Panc1 (cell line): ENCODE measurements at regions of chr4 and their contacts with region 1.

Region 1: GRCh38 chr4:21656832-21657231 is 291.7 kb downstream of the KCNIP4 start:
- DNase-seq: no peak
- ATAC-seq: no peak
- H3K4me3 ChIP-seq: no peak overlapping the region
- H3K27ac ChIP-seq: no peak overlapping the region
- H3K4me1 ChIP-seq: no peaks in the 10 kb centered on the region
- H3K27me3 ChIP-seq: no peaks in the 10 kb centered on the region
- CTCF ChIP-seq: no peak

Region 2: GRCh38 chr4:21413809-21414370 is 242.9 kb before region 1 on chr4:
- CTCF ChIA-PET with region 1: no interaction called
- POLR2A ChIA-PET with region 1: interaction called, 10 read pairs
- in situ Hi-C with region 1: no loop called
- intact Hi-C with region 1: no loop called
- DNase-seq: no peak
- ATAC-seq: no peak
- H3K4me3 ChIP-seq: no peak overlapping the region
- H3K27ac ChIP-seq: no peak overlapping the region
- H3K4me1 ChIP-seq: no peaks in the 10 kb centered on the region
- H3K27me3 ChIP-seq: no peaks in the 10 kb centered on the region
- CTCF ChIP-seq: no peak

Region 3: GRCh38 chr4:21569638-21570037 is 87.2 kb before region 1 on chr4:
- CTCF ChIA-PET with region 1: no interaction called
- POLR2A ChIA-PET with region 1: no interaction called
- in situ Hi-C with region 1: no loop called
- intact Hi-C with region 1: no loop called
- DNase-seq: no peak
- ATAC-seq: no peak
- H3K4me3 ChIP-seq: no peak overlapping the region
- H3K27ac ChIP-seq: no peak overlapping the region
- H3K4me1 ChIP-seq: no peaks in the 10 kb centered on the region
- H3K27me3 ChIP-seq: no peaks in the 10 kb centered on the region
- CTCF ChIP-seq: no peak